ENCODE measurements at regions of chr1 and their contacts with region 1.

Region 1: DNA sequence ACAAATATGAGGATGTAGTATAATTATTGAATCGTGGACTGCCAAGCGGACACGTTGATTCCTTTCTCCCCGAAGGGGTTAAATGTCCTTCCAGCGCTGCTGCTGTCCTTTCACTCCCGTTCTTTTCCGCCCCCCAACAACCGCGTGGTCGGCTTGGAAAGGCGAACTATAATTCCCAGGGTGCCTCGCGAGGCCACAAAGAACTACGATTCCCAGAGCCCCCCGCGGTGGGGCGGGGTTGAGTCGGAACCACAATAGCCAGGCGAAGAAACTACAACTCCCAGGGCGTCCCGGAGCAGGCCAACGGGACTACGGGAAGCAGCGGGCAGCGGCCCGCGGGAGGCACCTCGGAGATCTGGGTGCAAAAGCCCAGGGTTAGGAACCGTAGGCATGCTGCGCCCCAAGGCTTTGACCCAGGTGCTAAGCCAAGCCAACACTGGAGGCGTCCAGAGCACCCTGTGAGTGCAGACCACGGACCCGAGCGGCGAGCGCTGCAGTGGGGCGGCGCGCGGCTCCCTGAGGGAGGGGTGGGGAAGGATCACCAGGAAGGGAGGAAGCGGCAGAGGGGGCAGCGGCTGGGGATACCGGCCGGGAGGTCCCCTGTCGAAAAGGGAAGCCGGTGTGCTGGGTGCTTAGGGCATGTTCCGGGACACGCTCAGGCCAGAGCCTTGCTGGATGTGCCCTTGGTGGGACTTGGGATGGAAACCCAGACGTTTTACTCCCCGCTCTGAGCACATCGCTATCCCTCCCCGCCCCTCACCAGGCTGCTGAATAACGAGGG is at the start of gene LAMTOR2:
- DNase-seq: peak; percentile 98 to 100 (median 98)

Region 2: DNA sequence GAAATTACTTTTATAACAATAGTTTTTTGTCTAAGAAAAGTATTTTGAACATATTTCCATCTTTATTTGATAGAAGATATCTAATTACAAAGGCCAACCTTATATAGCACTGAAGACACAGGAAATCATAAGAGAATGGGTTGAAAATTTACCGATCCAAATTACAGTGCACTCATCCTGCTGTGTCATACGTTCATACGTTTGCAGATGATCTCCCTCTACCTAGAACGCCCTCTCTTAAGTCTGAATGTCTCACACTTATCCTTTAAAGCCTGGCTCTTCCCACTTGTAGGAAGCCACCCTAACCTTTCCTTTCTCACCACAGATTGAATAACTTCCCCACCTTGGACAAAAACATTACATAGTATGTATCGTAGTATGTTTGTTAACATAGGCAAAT is 501.3 kb before region 1 on chr1:
- intact Hi-C with region 1: no loop called
- DNase-seq: no peak

Region 3: GRCh38 chr1:155929057-155929456 is 125.6 kb before region 1 on chr1:
- intact Hi-C with region 1: no loop called
- DNase-seq: no peak

Region 4: DNA sequence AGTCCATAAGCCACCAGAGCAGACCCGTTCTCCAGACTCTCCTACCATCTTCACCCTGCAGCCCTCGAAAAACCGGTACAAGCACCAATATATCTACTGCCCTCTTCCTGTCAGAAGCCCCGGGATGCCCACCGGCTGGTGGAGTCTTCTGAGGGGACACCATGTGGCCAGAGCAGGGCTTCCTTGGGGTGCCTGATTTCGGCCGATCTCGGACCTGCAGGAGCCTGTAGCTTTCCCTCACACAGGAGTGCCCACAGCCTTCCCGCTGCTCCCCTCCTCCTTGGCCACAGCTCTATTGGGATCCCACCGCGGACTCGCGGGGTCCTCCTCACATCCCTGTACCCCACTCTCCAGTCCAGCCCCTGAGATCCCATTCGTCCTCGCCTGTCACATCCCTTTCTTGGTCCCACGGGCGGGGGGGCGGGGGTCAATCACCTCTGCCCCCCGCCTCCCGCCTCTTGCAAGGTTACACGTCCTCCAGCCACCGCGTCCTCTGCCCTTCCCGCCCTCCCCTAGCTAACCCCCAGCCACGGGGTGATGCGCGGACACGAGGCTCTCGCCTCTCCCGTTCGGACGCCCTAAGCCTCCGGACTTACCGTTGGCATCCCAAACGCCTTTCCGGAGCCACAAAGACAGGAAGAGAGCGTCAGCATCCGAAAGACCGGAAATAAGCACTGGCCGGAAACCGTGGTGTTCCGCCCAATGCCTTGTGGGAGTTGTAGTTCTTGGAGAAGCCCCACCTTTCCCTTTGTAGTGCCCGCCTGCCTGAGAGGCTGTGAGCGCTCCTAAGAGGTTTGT is 34.2 kb before region 1 on chr1 and contains the start of gene SSR2:
- intact Hi-C with region 1: loop called (anchors 1 kb)
- DNase-seq: peak; percentile 81 to 98 (median 89)

Region 5: GRCh38 chr1:156082309-156083091 is 27.8 kb after region 1 on chr1 and contains the start of gene MEX3A:
- intact Hi-C with region 1: loop called (anchors 2 kb)
- DNase-seq: peak; percentile 72 to 97 (median 78)

Measured in posterior cingulate gyrus (tissue), 11 donors.